AG04449 (cell line): ENCODE measurements at regions of chr11 and their contacts with region 1.

Region 1: GRCh38 chr11:95067039-95067840 is 521 bp downstream of the SRSF8 start:
- DNase-seq: no peak
- H3K4me3 ChIP-seq: peak overlapping the region; percentile 81
- CTCF ChIP-seq: peak; percentile 91

Region 2: GRCh38 chr11:93817426-93818348 is 1249.6 kb before region 1 on chr11:
- CTCF ChIA-PET with region 1: no interaction called
- POLR2A ChIA-PET with region 1: no interaction called
- DNase-seq: no peak
- H3K4me3 ChIP-seq: no peak overlapping the region
- CTCF ChIP-seq: no peak

Region 3: DNA sequence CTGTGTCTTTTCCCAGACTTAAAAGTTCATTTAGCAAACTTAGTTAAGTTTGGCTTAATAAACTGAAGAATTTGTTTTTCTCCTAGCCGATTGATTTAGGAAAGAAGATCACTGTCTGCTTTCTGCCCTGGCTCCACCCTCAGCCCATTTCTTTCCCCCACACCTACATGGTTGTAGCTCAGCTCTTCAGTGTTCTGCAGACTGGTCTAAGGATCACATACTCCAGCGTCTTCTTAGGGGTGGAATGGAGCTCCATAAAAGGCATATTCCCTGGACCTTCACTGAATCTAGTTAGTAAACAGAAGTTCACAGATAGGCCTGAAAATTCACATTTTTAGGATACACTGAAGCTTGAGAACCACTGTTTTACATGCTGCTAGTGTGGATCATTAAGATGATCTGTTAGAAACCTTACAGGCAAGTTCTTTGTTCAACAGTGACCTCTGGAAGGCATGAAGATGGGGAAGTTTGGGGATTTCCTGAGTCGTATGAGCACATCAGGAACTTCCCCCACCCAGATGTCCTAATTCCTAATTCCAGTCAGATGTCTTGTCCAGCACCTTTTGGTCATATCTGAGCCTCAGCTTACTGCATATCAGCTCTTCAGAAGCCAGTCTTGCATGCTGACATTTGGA is 483.3 kb before region 1 on chr11:
- CTCF ChIA-PET with region 1: no interaction called
- POLR2A ChIA-PET with region 1: no interaction called
- DNase-seq: no peak
- H3K4me3 ChIP-seq: no peak overlapping the region
- CTCF ChIP-seq: no peak

Region 4: DNA sequence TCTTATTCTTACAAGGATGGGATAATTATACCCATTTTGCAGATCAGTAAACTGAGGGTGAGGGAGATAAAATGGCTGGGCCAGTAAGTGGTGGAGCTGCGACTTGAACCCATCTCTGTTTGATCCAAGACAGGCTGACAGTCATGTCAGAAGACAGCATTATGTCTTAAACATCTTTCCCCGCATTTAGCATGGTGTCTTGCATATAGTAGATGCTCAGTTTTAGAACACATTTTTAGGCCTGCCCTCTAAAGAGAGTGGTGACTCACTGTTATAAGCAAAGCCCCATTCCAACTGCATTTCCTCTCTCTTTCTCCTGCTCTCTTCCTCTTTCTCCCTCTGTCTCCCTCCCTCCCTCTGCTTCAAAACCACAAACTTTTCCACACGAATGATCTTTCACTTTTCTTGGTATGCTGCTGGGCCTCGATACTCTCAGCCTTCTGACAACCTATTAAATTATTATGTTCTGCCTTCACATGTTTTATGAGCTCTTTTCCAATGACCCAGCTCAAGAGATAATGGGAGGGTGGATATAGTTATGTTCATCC is 119.1 kb before region 1 on chr11:
- CTCF ChIA-PET with region 1: no interaction called
- POLR2A ChIA-PET with region 1: no interaction called
- DNase-seq: no peak
- H3K4me3 ChIP-seq: no peak overlapping the region
- CTCF ChIP-seq: no peak

Region 5: GRCh38 chr11:95055283-95055897 is 11.8 kb before region 1 on chr11:
- CTCF ChIA-PET with region 1: interaction called, 22 read pairs
- POLR2A ChIA-PET with region 1: interaction called, 5 read pairs
- DNase-seq: no peak
- H3K4me3 ChIP-seq: no peak overlapping the region
- CTCF ChIP-seq: no peak

Region 6: DNA sequence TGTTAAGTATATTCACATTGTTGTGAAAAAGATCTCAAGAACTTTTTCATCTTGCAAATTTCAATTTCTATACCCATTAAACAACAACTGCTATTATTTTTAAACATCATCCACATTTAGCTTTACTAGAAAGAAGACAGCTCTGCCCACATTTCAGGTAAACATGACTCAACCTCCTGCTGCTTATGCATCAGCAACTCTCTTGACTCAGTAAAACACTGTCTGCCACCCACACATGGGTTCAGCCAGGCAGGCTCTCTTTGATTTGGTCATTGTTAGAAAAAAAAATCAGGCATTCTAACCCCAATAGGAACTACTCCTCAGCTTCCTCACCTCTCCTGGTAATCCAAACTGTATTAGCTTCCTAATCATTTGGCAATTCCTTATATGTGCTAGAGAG is 17.3 kb after region 1 on chr11:
- CTCF ChIA-PET with region 1: interaction called, 50 read pairs
- POLR2A ChIA-PET with region 1: interaction called, 28 read pairs
- DNase-seq: no peak
- H3K4me3 ChIP-seq: no peak overlapping the region
- CTCF ChIP-seq: no peak

Region 7: GRCh38 chr11:95089620-95090542 is 22.6 kb after region 1 on chr11 and contains the start of gene ENDOD1:
- CTCF ChIA-PET with region 1: interaction called, 35 read pairs
- POLR2A ChIA-PET with region 1: interaction called, 28 read pairs
- DNase-seq: no peak
- H3K4me3 ChIP-seq: peak within 1 kb of the TSS; percentile 71
- CTCF ChIP-seq: no peak

Region 8: GRCh38 chr11:95138448-95138847 is 71.2 kb after region 1 on chr11:
- CTCF ChIA-PET with region 1: interaction called, 299 read pairs
- POLR2A ChIA-PET with region 1: interaction called, 3 read pairs
- DNase-seq: no peak
- H3K4me3 ChIP-seq: no peak overlapping the region
- CTCF ChIP-seq: no peak

Region 9: GRCh38 chr11:95150946-95151684 is 83.9 kb after region 1 on chr11:
- CTCF ChIA-PET with region 1: interaction called, 299 read pairs
- POLR2A ChIA-PET with region 1: interaction called, 16 read pairs
- DNase-seq: no peak
- H3K4me3 ChIP-seq: peak overlapping the region; percentile 58
- CTCF ChIP-seq: peak; percentile 85

Region 10: DNA sequence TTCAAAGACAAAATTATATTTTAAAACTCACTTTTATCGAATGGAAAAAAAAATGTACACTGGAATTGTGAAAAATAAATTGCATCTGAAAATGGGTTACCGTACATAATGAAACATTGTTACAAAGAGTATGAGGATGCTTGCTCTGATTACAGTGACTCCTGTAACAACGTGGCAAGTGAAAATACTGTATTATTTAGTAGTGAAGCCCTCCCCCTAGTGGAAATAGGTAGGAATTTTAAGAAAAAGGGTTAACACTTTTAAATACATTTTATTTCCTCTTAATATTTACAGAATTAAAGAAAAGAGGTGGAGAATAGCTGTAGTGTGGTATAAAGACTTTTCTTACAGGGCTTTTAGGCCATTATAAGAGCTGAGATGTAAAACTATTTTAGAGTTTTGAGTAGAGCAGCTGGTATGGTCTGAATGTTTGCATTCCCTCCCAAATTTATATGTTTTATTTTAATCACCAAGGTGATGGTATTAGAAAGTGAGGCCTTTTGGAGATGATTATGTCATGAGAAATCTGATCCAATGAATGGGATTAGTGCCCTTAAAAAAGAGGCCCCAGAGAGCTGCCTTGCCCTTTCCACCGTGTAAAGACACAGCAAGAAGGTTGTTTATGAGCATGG is 697.1 kb after region 1 on chr11:
- CTCF ChIA-PET with region 1: interaction called, 89 read pairs
- POLR2A ChIA-PET with region 1: no interaction called
- DNase-seq: no peak
- H3K4me3 ChIP-seq: no peak overlapping the region
- CTCF ChIP-seq: peak; percentile 31